ENCODE measurements at regions of chr5 and their contacts with region 1.

Region 1: DNA sequence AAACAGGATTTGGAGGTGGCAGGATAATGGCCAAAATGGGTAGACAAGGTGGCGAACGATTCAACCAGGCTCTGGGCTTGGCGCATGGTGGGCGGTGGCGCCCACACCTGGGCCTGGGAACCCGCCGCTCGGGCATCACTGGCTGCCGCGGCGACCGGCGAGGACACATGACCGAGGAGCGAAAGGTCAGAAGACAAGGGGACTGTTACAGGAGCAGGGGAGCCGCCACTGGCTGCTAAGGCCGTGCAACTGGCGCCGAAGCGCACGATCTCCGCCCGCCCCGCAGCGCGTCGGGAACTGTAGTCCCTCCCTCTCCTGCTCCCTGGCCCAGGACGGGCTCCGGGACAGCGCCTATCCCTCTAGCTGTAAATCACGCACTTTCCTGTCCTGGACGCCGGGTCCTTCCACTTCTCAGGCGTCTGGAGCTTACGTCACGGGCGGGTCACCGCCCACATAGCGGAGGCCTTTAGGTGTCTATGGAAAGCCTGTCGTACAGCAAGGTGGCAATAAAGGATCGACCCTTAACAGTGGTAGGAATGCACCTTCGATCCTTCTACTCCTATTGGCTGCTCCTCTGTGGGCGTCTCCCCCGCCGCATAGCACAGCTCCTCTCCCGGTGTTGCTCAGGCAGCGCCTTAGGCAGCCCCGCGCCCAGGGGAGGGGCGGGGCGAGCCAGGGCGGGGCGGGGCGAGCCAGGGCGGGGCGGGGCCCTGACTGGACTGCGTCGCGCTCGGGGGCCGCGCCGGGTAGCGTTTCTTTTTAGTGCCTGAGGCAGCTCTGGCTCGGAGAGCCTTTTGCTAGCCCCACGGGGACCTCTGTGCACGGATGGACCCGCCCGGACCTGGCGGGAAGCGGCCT is at the start of gene ICE1:
- DNase-seq: peak; percentile 97
- H3K4me3 ChIP-seq: peak within 1 kb of the TSS; percentile 98
- H3K27ac ChIP-seq: peak within 1 kb of the TSS; percentile 93
- H3K4me1 ChIP-seq: peaks cover 6% of the 10 kb centered on the region
- H3K27me3 ChIP-seq: no peaks in the 10 kb centered on the region
- CTCF ChIP-seq: no peak
- total RNA-seq, gene ICE1: 19.2 to 20.1 TPM

Region 2: GRCh38 chr5:4879693-4880303 is 542.4 kb before region 1 on chr5:
- intact Hi-C with region 1: loop called (anchors 5 kb)
- DNase-seq: peak; percentile 66
- H3K4me3 ChIP-seq: no peak overlapping the region
- H3K27ac ChIP-seq: no peak overlapping the region
- H3K4me1 ChIP-seq: no peaks in the 10 kb centered on the region
- H3K27me3 ChIP-seq: no peaks in the 10 kb centered on the region
- CTCF ChIP-seq: peak; percentile 87

Region 3: GRCh38 chr5:5141625-5142532 is 280.3 kb before region 1 on chr5:
- intact Hi-C with region 1: loop called (anchors 2 kb)
- DNase-seq: peak; percentile 63
- H3K4me3 ChIP-seq: no peak overlapping the region
- H3K27ac ChIP-seq: no peak overlapping the region
- H3K4me1 ChIP-seq: no peaks in the 10 kb centered on the region
- H3K27me3 ChIP-seq: peaks cover 17% of the 10 kb centered on the region
- CTCF ChIP-seq: peak; percentile 78

Region 4: GRCh38 chr5:5353679-5354078 is 68.5 kb before region 1 on chr5:
- intact Hi-C with region 1: no loop called
- DNase-seq: no peak
- H3K4me3 ChIP-seq: no peak overlapping the region
- H3K27ac ChIP-seq: no peak overlapping the region
- H3K4me1 ChIP-seq: no peaks in the 10 kb centered on the region
- H3K27me3 ChIP-seq: no peaks in the 10 kb centered on the region
- CTCF ChIP-seq: no peak

Region 5: GRCh38 chr5:5598547-5599113 is 176.4 kb after region 1 on chr5:
- intact Hi-C with region 1: no loop called
- DNase-seq: no peak
- H3K4me3 ChIP-seq: no peak overlapping the region
- H3K27ac ChIP-seq: no peak overlapping the region
- H3K4me1 ChIP-seq: no peaks in the 10 kb centered on the region
- H3K27me3 ChIP-seq: no peaks in the 10 kb centered on the region
- CTCF ChIP-seq: no peak

Region 6: GRCh38 chr5:6712577-6713275 is 1290.5 kb after region 1 on chr5:
- intact Hi-C with region 1: loop called (anchors 10 kb)
- DNase-seq: peak; percentile 95
- H3K4me3 ChIP-seq: peak overlapping the region; percentile 82
- H3K27ac ChIP-seq: peak overlapping the region; percentile 95
- H3K4me1 ChIP-seq: peaks cover 9% of the 10 kb centered on the region
- H3K27me3 ChIP-seq: no peaks in the 10 kb centered on the region
- CTCF ChIP-seq: no peak

Measured in colonic mucosa (tissue), 4 donors.